ENCODE measurements at regions of chr15 and their contacts with region 1.

Region 1: GRCh38 chr15:68053701-68054627 is at the start of gene PIAS1:
- DNase-seq: peak; percentile 97
- ATAC-seq: peak; percentile 90
- H3K4me3 Mint-ChIP-seq: peak within 1 kb of the TSS; percentile 93
- H3K27ac Mint-ChIP-seq: peak within 1 kb of the TSS; percentile 71; the same call in 1 of the 2 replicates
- H3K4me1 Mint-ChIP-seq: peaks cover 49% of the 10 kb centered on the region
- H3K27me3 Mint-ChIP-seq: peaks cover 7% of the 10 kb centered on the region
- CTCF ChIP-seq: no peak
- total RNA-seq, gene PIAS1: 29.7 to 33.2 TPM (median 31.2 TPM) in 3 replicates

Region 2: DNA sequence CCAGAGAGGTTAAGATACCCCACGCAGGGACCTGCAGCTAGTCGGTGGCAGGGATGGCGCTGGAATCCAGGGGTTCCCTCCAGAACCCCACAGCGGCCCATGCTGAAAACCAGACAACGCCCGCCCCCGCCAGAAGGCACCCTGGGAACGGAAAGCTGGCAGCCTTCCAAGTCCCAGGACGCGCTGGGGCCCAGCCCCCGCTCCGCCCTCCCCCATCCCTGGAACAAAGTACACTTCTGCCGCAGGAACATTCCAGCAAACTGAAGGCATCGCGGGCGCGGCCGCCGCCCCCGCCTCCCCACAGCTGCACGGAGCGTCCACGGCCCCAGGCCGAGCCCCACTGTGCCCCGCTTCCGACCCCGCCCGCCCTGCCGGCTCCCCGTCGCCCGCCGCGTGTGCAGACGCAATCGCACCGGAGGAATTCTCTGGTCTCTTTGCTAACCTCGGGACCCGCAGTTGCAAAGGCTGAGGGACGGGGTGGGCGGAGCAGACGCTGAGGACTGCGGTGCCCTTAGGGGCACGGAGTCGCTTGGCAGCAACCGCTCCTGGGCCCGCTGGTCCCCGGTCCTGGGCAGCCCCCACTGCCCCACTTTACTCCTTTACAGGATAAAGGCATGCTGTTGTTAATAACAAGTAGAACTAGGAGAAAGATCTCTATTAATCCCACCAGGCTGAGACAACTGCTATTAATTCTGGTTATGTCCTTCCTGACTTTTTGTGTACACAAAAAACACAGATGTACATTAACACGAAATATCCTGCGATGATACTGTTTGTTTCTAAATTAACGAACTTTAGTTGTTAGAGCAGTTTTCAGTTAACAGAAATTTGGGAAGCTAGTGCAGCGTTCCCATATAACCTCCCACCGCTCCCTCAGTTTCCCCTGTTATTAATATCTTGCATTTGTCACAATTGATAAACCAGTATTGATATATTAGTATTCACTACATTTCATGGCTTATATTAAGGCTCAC is 169.2 kb before region 1 on chr15:
- CTCF ChIA-PET with region 1: interaction called, 10 read pairs
- POLR2A ChIA-PET with region 1: no interaction called
- DNase-seq: peak; percentile 76
- ATAC-seq: peak; percentile 94
- H3K4me3 Mint-ChIP-seq: peak overlapping the region; percentile 64
- H3K27ac Mint-ChIP-seq: peak overlapping the region; percentile 58; the same call in 1 of the 2 replicates
- H3K4me1 Mint-ChIP-seq: peaks cover 26% of the 10 kb centered on the region
- H3K27me3 Mint-ChIP-seq: peaks cover 23% of the 10 kb centered on the region
- CTCF ChIP-seq: no peak